ENCODE measurements at regions of chr12 and their contacts with region 1.

Region 1: DNA sequence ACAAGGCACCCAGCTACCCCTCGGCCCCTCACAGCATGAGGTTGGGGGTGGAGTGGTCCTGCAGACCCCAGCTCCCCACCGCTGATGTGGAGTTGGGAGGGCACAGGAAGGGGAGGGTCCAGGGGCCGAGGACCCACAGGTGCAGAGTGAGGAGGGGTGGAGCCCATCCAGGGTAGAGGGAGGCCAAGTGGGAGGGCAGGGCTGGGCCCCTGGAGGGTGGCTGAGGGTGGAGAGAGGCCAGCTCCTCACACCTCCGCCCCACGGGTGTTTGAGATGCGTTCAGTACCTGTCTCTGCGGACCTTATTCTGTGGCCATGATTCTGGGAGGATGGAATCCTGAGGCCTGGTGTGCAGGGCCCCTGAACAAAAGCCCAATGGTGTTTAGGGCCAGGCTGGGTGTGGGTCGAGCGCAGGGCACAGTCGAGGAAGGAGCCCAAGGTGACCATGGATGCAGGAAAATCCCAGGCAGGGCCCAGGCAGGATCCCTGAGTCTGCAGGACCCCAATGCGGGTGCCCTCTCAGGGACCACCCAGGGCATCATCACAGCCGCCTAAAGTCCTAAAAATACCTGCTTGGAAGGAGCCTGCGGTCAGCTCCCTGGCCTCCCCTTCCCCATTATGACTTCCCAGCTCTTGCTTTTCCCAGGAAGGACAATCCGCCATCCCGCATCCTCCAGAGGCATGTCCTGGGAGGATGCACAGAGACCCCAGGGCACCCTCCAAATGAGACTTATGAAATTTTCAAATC is 377.1 kb upstream of the SFSWAP start:
- DNase-seq: no peak
- ATAC-seq: no peak
- H3K4me3 Mint-ChIP-seq: no peak overlapping the region
- H3K27ac Mint-ChIP-seq: no peak overlapping the region
- H3K4me1 Mint-ChIP-seq: no peaks in the 10 kb centered on the region
- H3K27me3 Mint-ChIP-seq: peaks cover 2% of the 10 kb centered on the region

Region 2: GRCh38 chr12:131353821-131354220 is 20.0 kb after region 1 on chr12:
- CTCF ChIA-PET with region 1: no interaction called
- POLR2A ChIA-PET with region 1: no interaction called
- intact Hi-C with region 1: no loop called
- DNase-seq: no peak
- ATAC-seq: no peak
- H3K4me3 Mint-ChIP-seq: no peak overlapping the region
- H3K27ac Mint-ChIP-seq: no peak overlapping the region
- H3K4me1 Mint-ChIP-seq: no peaks in the 10 kb centered on the region
- H3K27me3 Mint-ChIP-seq: peaks cover 15% of the 10 kb centered on the region

Region 3: GRCh38 chr12:131631230-131631629 is 297.4 kb after region 1 on chr12:
- CTCF ChIA-PET with region 1: no interaction called
- POLR2A ChIA-PET with region 1: no interaction called
- intact Hi-C with region 1: loop called (anchors 2 to 10 kb)
- DNase-seq: no peak
- ATAC-seq: no peak
- H3K4me3 Mint-ChIP-seq: no peak overlapping the region
- H3K27ac Mint-ChIP-seq: no peak overlapping the region
- H3K4me1 Mint-ChIP-seq: peaks cover 4% of the 10 kb centered on the region
- H3K27me3 Mint-ChIP-seq: peaks cover 15% of the 10 kb centered on the region

Region 4: GRCh38 chr12:131639270-131639940 is 305.6 kb after region 1 on chr12:
- CTCF ChIA-PET with region 1: no interaction called
- POLR2A ChIA-PET with region 1: no interaction called
- intact Hi-C with region 1: loop called in 1 of 2 experiments (anchors 10 kb)
- DNase-seq: no peak
- ATAC-seq: no peak
- H3K4me3 Mint-ChIP-seq: no peak overlapping the region
- H3K27ac Mint-ChIP-seq: no peak overlapping the region
- H3K4me1 Mint-ChIP-seq: no peaks in the 10 kb centered on the region
- H3K27me3 Mint-ChIP-seq: peaks cover 17% of the 10 kb centered on the region

Measured in activated CD4-positive, alpha-beta T cell treated with anti-CD3 and anti-CD28 coated beads for 36 hours (primary cell).